ENCODE measurements at regions of chr7 and their contacts with region 1.

Region 1: GRCh38 chr7:43362652-43363034 is 220.3 kb upstream of the STK17A start:
- DNase-seq: no peak
- ATAC-seq: peak in 1 of 4 donors; percentile 6
- H3K4me3 ChIP-seq: no peak overlapping the region
- H3K27ac ChIP-seq: no peak overlapping the region
- H3K4me1 ChIP-seq: no peaks in the 10 kb centered on the region
- H3K27me3 ChIP-seq: no peaks in the 10 kb centered on the region
- CTCF ChIP-seq: no peak
- POLR2A ChIP-seq: no peak

Region 2: DNA sequence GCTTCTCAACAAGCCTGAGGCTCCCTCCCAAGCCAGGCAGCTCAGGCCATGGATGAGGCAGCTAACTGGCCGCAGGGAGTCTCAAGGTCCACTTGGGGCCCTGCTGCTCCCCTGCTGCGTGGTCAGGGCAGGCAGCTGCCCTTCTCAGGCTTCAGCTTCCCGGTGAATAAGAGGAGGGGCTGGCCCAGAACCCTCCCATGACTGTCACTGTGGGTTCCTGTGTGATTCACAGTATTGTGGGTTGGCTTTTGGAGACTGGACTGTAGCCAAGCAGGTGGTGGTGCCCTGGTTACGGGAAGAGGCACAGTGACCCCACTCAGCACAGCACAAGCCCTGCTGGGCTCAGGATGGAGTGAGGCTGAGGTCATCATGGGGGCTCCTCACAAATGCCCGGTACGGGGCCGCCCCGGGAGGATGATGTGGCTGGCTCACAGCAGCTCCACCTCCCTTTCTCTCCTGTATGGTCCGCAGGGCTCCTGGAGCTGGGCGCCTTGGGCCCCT is 60.4 kb before region 1 on chr7:
- intact Hi-C with region 1: loop called in 1 of 2 experiments (anchors 10 kb)
- DNase-seq: no peak
- ATAC-seq: peak in 2 of 4 donors; percentile 13 to 33
- H3K4me3 ChIP-seq: no peak overlapping the region
- H3K27ac ChIP-seq: no peak overlapping the region
- H3K4me1 ChIP-seq: no peaks in the 10 kb centered on the region
- H3K27me3 ChIP-seq: no peaks in the 10 kb centered on the region
- CTCF ChIP-seq: no peak
- POLR2A ChIP-seq: no peak